ENCODE measurements at regions of chr16 and their contacts with region 1.

Region 1: GRCh38 chr16:22007509-22008214 is at the start of gene MOSMO:
- DNase-seq: peak; percentile 72
- H3K4me3 ChIP-seq: peak within 1 kb of the TSS; percentile 63 to 86 (median 76)
- H3K27ac ChIP-seq: peak within 1 kb of the TSS; percentile 56
- H3K4me1 ChIP-seq: peaks cover 20% of the 10 kb centered on the region
- H3K27me3 ChIP-seq: no peaks in the 10 kb centered on the region
- CTCF ChIP-seq: peak in 1 of 2 donors; percentile 9
- POLR2A ChIP-seq: peak; percentile 58
- total RNA-seq, gene MOSMO: 22.0 and 23.2 TPM in 2 replicates

Region 2: DNA sequence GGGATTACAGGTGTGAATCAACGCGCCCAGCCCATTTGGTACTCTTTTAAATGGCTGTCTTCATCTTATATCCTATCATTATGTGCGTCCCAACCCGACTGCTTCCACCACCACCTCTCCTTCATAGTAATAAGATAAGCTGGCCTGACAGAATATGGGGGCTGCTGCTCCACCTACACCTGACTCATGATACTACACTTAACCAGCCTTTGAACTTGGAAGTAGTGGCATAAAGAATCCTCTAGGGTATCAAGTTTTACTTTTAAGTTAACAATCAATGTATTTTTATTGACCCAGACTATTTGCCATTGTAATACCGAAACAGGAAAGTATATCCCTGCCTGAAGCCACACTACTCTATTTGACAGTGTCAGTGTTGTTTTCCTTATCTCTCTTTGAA is 25.6 kb before region 1 on chr16:
- CTCF ChIA-PET with region 1: no interaction called
- POLR2A ChIA-PET with region 1: no interaction called
- dilution Hi-C with region 1: no loop called
- intact Hi-C with region 1: no loop called
- DNase-seq: no peak
- H3K4me3 ChIP-seq: no peak overlapping the region
- H3K27ac ChIP-seq: no peak overlapping the region
- H3K4me1 ChIP-seq: no peaks in the 10 kb centered on the region
- H3K27me3 ChIP-seq: no peaks in the 10 kb centered on the region
- CTCF ChIP-seq: no peak
- POLR2A ChIP-seq: no peak

Region 3: DNA sequence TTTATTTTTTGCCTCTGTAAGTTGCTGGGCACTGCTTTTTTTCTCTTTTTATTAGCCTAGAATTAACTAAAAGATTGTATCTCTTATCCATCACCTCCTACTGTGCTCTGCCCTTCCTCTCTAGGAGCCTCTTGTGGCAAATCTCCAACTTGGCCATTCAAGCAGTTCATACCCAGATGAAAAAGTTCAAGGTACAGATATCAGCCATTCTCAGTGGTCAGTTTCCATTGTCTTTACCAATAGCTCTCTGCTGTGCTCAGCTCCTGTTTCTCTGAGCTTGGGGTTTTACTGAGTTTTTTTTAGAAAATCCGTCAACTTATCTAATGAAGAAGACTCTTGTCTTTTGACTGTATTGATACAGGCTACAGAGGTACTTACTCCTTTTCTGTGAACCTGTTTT is 15.8 kb after region 1 on chr16:
- CTCF ChIA-PET with region 1: interaction called, 10 read pairs
- POLR2A ChIA-PET with region 1: interaction called, 5 read pairs
- dilution Hi-C with region 1: no loop called
- intact Hi-C with region 1: loop called (anchors 1 kb)
- DNase-seq: no peak
- H3K4me3 ChIP-seq: no peak overlapping the region
- H3K27ac ChIP-seq: no peak overlapping the region
- H3K4me1 ChIP-seq: peaks cover 59% of the 10 kb centered on the region
- H3K27me3 ChIP-seq: no peaks in the 10 kb centered on the region
- CTCF ChIP-seq: no peak
- POLR2A ChIP-seq: no peak

Region 4: GRCh38 chr16:22070361-22071330 is 63.0 kb after region 1 on chr16:
- CTCF ChIA-PET with region 1: interaction called, 994 read pairs
- POLR2A ChIA-PET with region 1: no interaction called
- dilution Hi-C with region 1: no loop called
- intact Hi-C with region 1: no loop called
- DNase-seq: peak; percentile 57
- H3K4me3 ChIP-seq: no peak overlapping the region
- H3K27ac ChIP-seq: peak overlapping the region; percentile 43
- H3K4me1 ChIP-seq: peaks cover 46% of the 10 kb centered on the region
- H3K27me3 ChIP-seq: no peaks in the 10 kb centered on the region
- CTCF ChIP-seq: no peak
- POLR2A ChIP-seq: no peak